ENCODE measurements at regions of chr11 and their contacts with region 1.

Region 1: GRCh38 chr11:64539711-64540427 is 51.2 kb upstream of the SLC22A12 start:
- DNase-seq: no peak
- H3K4me3 ChIP-seq: no peak overlapping the region
- H3K27ac ChIP-seq: no peak overlapping the region
- H3K4me1 ChIP-seq: peaks cover 33% of the 10 kb centered on the region
- H3K27me3 ChIP-seq: no peaks in the 10 kb centered on the region
- CTCF ChIP-seq: no peak

Region 2: DNA sequence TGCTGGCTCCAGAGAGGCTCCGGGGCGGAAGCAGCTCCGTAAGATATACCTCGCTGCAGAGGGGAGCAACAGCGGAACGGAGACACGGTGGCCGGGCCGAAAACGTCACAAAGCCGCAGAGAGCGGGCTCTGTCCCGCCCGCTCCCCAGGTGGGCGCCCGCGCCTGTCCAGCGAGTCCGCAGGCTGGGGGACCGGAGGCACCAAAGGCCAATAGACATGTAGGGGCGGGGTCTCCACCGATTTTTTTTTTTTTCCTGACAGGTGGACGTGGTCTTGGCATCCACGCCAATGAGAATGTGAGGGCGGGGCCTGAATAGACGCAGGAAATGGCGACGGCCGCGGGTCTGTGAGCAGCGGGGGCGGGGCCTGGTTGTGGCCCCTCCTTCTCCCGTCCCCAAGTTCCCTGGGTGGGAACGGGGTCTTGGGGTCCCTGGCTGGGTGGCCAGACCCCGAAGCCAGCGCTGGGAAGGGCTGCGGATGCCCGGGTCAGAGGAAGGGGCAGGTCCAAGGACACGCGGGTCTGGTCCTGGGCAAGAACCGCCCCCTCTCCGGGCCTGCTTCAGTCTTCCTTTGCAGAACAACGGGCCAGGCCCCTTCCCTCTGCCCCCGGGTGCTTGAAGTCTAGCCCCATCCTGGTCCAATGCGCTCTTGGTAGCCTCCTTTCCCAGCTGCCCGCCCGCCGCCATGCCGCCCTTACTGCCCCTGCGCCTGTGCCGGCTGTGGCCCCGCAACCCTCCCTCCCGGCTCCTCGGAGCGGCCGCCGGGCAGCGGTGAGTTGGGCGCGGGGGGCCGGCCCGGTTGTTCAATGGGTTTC is 309.5 kb before region 1 on chr11 and contains the start of gene DNAJC4:
- CTCF ChIA-PET with region 1: no interaction called
- dilution Hi-C with region 1: no loop called
- in situ Hi-C with region 1: no loop called
- intact Hi-C with region 1: no loop called
- DNase-seq: peak; percentile 80
- H3K4me3 ChIP-seq: peak within 1 kb of the TSS; percentile 62 to 96 (median 64)
- H3K27ac ChIP-seq: peak within 1 kb of the TSS; percentile 4
- H3K4me1 ChIP-seq: peaks cover 43% of the 10 kb centered on the region
- H3K27me3 ChIP-seq: no peaks in the 10 kb centered on the region
- CTCF ChIP-seq: no peak
- total RNA-seq, gene DNAJC4: 10.2 to 15.6 TPM

Region 3: GRCh38 chr11:64674774-64675173 is 134.9 kb after region 1 on chr11:
- CTCF ChIA-PET with region 1: no interaction called
- dilution Hi-C with region 1: loop called (anchors 5 kb)
- in situ Hi-C with region 1: no loop called
- intact Hi-C with region 1: no loop called
- DNase-seq: no peak
- H3K4me3 ChIP-seq: no peak overlapping the region
- H3K27ac ChIP-seq: no peak overlapping the region
- H3K4me1 ChIP-seq: peaks cover 6% of the 10 kb centered on the region
- H3K27me3 ChIP-seq: no peaks in the 10 kb centered on the region
- CTCF ChIP-seq: no peak

Region 4: GRCh38 chr11:64750361-64751054 is 210.6 kb after region 1 on chr11:
- CTCF ChIA-PET with region 1: no interaction called
- dilution Hi-C with region 1: loop called (anchors 5 kb)
- in situ Hi-C with region 1: no loop called
- intact Hi-C with region 1: no loop called
- DNase-seq: no peak
- H3K4me3 ChIP-seq: no peak overlapping the region
- H3K27ac ChIP-seq: no peak overlapping the region
- H3K4me1 ChIP-seq: peaks cover 9% of the 10 kb centered on the region
- H3K27me3 ChIP-seq: no peaks in the 10 kb centered on the region
- CTCF ChIP-seq: no peak

Measured in mammary epithelial cell (primary cell).